ENCODE measurements at regions of chr4 and their contacts with region 1.

Region 1: DNA sequence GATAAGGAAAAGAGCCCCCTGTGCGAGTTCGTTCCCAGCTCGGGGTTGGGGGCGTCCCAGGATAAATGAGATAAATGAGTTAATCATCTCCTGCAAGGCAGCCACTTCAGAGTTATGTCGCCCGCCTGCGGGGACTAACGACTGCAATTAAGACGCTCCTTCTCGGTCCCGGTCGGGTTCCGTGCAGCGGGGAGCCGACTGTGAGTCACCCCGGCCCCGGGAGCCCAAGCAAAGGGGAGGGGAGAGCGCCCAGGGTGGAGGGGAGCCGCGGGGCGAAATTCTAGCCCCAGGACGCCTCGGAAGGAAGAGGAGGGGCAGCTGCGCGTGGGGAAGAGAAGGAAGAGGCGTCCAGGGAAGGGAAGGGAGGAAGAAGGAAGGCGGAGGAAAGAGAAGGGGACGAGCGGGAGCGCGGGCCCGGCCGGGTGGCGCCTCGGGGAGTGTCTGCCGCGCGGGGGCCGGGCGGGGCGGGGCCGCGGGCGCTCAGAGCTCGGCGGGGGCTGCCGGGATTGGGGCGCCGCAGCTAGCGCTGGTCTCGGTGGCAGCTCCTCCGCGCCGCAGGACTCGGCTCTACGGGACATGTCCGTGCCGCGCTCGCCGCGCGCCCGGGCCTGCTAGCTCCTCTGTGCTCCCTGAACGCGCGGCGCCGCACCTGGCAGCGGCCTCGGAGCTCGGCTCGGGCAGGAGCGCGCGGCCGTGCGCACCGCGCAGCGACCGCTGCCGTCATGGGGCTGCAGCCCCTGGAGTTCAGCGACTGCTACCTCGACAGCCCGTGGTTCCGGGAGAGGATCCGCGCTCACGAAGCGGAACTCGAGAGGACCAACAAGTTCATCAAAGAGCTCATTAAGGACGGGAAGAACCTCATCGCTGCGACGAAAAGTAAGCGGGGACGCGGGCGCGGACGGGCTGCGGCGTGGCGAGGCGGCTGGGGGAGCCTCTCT is at the start of gene ARHGAP10:
- DNase-seq: peak; percentile 84
- total RNA-seq, gene ARHGAP10: 41.8 TPM

Region 2: DNA sequence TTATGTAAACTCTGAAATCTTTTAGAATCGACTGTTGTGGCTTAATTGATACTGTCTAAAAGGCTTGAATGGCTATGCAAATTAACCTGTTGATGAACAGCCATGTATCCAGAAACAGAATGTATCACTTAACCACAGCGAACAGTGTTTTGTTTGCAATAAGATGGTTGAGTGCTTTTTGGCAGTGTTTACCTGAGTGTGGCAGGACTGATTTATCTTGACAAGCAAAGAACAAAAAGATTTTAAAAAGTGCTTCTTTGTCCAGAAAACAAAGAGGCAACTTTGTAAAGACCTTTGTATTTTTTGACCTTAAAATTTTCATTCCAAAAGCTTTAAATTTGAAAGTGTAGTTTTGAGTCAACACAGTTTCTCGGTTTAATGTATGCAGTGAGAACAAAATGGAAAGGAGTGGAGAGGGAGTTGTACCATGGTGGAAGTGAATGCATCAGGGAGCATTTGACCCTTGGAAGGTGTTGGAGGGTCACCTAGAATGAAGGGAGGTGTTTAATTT is 18.0 kb after region 1 on chr4:
- intact Hi-C with region 1: loop called (anchors 2 kb)
- DNase-seq: no peak

Region 3: DNA sequence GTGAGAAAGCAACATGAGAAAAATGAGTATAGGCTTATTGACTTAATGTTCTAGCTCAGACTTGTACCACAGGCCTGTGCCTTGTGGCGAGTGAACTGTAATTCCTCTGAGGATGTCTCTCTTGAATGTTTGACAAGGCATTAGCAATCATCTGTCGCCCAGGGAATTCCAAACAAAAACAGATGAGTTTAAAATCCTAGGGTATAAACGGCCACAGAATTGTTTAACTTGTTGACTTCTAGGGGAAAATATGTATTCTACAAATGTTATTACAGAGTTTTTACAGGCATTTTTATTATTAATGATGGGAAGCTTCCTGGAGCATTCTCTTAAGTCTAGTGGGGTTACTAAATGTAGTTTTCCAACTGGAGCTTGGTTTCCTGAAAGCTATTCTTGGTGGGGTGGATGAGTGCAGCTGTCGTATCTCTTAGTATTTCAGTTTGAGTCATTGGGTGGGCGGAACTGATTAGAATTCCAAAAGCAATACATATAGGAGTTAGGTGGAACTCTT is 40.7 kb after region 1 on chr4:
- intact Hi-C with region 1: loop called (anchors 5 kb)
- DNase-seq: no peak

Region 4: GRCh38 chr4:147822128-147822527 is 90.3 kb after region 1 on chr4:
- intact Hi-C with region 1: loop called (anchors 2 kb)
- DNase-seq: peak; percentile 85

Region 5: GRCh38 chr4:147866532-147867271 is 134.9 kb after region 1 on chr4:
- intact Hi-C with region 1: loop called (anchors 5 kb)
- DNase-seq: peak; percentile 92

Region 6: DNA sequence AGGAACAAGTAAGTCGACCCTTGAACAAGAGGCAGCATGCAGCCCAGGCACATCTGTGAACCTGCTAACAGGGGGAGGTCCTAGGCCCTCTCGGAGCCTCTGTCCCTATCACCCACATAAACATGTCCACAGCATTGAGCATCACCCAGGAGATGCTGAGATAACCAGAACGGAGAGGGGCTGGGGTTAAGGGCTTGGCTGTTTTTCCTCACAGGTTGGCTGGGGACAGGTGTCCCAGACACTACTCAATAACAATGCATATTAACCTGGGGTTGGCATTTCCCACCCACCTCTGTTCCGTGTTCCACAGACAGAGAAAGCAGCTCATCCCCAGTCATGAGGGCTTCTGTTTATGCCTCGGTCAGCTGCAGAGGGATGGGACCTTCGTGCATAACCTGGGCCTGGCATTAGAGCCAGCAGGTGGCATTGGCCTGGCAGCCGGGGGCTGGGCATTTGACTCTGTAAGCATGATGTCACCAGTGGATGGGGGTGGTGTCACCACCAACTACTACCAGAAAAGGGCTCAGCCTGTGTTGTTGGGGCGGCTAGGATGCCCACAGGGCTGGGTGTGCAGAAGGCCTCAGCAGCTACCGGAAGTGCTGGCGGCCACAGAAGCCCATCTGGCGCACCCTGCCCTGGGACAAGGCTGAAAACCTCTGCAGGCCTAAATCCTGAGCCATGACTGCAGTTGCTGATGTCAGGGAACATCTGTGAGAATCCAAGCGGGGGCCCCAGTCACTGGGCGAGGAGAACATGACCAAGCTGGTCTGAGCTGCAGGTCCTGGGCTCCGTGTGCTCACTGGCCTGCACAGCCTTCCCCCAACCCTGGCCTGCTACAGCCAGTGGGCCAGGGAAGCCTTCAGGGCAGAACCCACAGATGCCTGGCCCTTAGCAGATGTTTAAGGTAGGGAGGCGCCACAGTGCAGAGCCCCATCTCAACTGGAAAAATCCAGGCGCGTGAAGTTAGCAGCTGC is 358.9 kb after region 1 on chr4:
- intact Hi-C with region 1: no loop called
- DNase-seq: no peak